Heart left ventricle (tissue), 16 donors: ENCODE measurements at regions of chr22 and their contacts with region 1.

Region 1: DNA sequence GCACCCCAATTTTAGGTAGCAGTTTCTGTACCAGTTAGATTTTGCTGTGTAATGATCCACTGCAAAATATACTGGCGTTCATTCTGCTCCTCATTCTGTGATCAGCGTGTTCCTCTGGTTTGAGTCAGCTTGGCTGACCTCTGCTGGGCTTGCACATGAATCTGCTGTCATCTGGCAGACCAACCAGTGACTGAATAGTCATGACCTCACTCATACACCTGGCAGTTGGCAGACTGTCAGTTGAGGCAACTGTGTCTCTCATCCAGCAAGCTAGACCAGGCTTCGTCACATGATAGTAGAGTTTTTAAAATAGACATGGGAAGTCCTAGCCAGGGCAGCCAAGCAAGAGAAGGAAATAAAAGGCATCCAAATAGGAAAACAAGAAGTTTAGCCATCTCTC is 316.3 kb upstream of the LARGE1 start:
- DNase-seq: peak in 4 of 5 donors; percentile 76 to 90 (median 83)
- ATAC-seq: peak; percentile 98 to 100 (median 99)
- H3K4me3 ChIP-seq: no peak overlapping the region
- H3K27ac ChIP-seq: peak overlapping the region; percentile 21 to 71 (median 58)
- H3K4me1 ChIP-seq: peaks cover 0 to 6% (median 0%) of the 10 kb centered on the region in 12 donors
- H3K27me3 ChIP-seq: no peaks in the 10 kb centered on the region
- CTCF ChIP-seq: peak in 2 of 12 donors; percentile 24 to 30
- POLR2A ChIP-seq: no peak

Region 2: DNA sequence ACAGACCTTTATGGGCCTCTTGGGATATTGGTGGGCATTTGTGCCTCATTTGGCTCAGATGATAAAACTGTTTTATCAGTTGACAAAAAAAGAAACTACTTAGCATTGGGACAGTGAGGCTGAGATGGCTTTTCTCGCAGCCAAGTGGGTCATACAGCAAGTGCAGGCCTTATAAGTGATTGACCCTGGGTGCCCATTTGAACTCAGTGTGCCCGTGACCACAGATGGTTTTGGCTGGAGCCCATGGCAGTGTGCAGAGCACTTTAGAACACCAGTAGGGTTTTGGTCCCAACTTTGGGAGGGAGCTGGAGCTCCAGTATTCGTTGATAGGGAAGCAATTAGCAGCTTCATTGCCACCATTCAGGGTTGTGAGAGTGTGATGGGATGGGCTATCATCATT is 88.2 kb after region 1 on chr22:
- intact Hi-C with region 1: loop called in 1 of 10 experiments (anchors 10 kb)
- DNase-seq: peak; percentile 22 to 75 (median 59)
- ATAC-seq: peak; percentile 83 to 98 (median 90)
- H3K4me3 ChIP-seq: no peak overlapping the region
- H3K27ac ChIP-seq: no peak overlapping the region
- H3K4me1 ChIP-seq: peaks cover 0 to 11% (median 0%) of the 10 kb centered on the region in 12 donors
- H3K27me3 ChIP-seq: no peaks in the 10 kb centered on the region
- CTCF ChIP-seq: no peak
- POLR2A ChIP-seq: no peak